Activated T-helper 2 cell treated with anti-CD3 and anti-CD28 coated beads, Interferon-gamma antibody, Interleukin-2, Interleukin-4, amounts not matched to agents 10 μg/mL and 5 μg/mL and 100 μg/mL, durations not matched to agents 14 hours and 24 hours and 36 hours (primary cell): ENCODE measurements at regions of chr14 and their contacts with region 1.

Region 1: GRCh38 chr14:77616454-77617229 is at the start of gene SPTLC2:
- DNase-seq: peak; percentile 96
- H3K4me3 Mint-ChIP-seq: peak within 1 kb of the TSS; percentile 93
- H3K27ac Mint-ChIP-seq: peak within 1 kb of the TSS; percentile 92
- H3K4me1 Mint-ChIP-seq: peaks cover 35% of the 10 kb centered on the region
- H3K27me3 Mint-ChIP-seq: no peaks in the 10 kb centered on the region
- total RNA-seq, gene SPTLC2: 26.6 and 29.6 TPM in 2 replicates

Region 2: DNA sequence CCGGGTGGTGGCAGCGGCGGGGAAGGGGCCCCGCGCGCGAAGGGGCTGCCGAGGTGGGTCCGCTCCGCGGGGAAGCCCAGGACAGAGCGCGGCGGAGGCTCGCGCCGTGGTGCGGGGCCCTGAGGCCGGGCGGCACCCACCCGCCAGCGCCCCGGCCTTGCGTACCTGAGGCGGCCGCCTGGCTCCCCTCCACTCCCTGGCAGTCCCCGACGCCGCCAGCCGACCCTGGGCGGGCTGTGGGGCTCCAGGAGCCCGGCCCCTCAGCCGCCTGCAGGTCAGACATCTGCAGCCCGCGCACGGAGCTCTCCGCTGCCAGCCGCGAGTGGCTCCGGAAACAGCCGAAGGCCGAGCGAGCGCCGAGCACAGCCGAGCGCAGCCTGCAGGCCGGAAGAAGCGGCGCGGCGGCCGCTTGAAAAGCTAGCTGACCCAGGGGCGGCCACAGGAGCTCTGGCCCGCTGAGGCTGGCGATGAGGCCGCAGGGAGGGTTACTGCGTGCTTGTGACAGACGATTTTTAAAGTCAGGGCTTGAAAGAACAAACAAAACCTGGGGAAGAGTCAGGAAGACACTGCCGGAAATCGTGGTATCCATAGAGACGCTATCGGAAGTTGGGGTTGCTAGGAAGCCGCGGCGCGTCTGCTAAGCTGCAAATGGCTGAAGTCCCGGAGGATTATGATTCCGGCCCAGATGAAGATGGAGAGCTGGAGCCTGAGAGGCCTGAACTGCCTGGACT is 239.7 kb before region 1 on chr14 and contains the starts of genes SAMD15 and TMED8:
- intact Hi-C with region 1: loop called (anchors 1 kb)
- DNase-seq: peak; percentile 80
- H3K4me3 Mint-ChIP-seq: peak within 1 kb of the TSS; percentile 90
- H3K27ac Mint-ChIP-seq: peak within 1 kb of the TSS; percentile 89
- H3K4me1 Mint-ChIP-seq: peaks cover 37% of the 10 kb centered on the region
- H3K27me3 Mint-ChIP-seq: peaks cover 2% of the 10 kb centered on the region
- total RNA-seq, gene SAMD15: 0.41 and 0.57 TPM in 2 replicates
- total RNA-seq, gene TMED8: 28.0 and 29.0 TPM in 2 replicates

Region 3: DNA sequence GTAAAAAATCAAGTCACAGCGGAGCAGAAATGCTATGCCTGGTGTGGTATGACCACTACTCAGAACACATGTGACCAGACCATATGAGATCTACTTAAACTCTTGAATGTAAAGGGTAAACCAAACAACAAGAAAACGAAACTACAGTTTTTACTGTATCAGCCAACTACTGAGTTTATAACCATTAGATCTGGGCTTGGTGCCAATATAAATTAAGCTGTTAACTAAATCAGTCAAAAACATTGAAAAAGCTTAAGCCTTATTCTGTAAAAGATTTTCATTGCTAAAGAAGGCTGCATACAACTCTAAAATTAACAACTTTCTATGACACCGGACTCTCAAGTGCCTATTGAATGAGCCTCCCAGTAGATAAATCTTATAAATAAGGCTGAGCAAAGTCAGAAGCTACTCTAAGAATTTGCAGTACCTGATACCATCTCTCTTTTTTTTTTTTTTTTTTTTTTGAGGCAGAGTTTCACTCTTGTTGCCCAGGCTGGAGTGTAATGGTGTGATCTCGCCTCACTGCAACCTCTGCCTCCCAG is 35.6 kb before region 1 on chr14:
- intact Hi-C with region 1: loop called (anchors 5 kb)
- DNase-seq: no peak
- H3K4me3 Mint-ChIP-seq: peak overlapping the region; percentile 33
- H3K27ac Mint-ChIP-seq: peak overlapping the region; percentile 28
- H3K4me1 Mint-ChIP-seq: peaks cover 26% of the 10 kb centered on the region
- H3K27me3 Mint-ChIP-seq: no peaks in the 10 kb centered on the region